Aorta (tissue), 5 donors: ENCODE measurements at regions of chr16 and their contacts with region 1.

Region 1: DNA sequence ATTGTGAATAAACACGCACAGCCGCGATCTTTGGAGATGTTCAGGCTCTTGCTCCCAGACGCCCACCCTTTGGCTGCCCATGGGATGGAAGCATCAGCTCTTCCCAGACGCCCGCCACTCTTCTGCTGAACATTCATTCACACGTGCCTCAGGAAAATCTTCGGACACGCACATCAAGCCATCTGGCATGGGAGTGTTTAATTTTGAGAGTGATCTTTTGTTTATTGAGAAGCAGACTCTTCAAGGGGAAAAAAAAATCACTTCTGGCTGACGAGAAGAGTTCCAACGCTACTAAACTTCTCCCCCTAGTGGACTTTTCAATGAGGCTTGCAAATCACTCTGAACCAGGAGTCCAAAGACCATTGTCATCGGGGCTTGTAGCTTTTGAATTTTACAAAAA is 62.0 kb upstream of the NUDT7 start:
- DNase-seq: no peak
- ATAC-seq: no peak
- H3K4me3 ChIP-seq: no peak overlapping the region
- H3K27ac ChIP-seq: no peak overlapping the region
- H3K4me1 ChIP-seq: no peaks in the 10 kb centered on the region
- H3K27me3 ChIP-seq: no peaks in the 10 kb centered on the region

Region 2: DNA sequence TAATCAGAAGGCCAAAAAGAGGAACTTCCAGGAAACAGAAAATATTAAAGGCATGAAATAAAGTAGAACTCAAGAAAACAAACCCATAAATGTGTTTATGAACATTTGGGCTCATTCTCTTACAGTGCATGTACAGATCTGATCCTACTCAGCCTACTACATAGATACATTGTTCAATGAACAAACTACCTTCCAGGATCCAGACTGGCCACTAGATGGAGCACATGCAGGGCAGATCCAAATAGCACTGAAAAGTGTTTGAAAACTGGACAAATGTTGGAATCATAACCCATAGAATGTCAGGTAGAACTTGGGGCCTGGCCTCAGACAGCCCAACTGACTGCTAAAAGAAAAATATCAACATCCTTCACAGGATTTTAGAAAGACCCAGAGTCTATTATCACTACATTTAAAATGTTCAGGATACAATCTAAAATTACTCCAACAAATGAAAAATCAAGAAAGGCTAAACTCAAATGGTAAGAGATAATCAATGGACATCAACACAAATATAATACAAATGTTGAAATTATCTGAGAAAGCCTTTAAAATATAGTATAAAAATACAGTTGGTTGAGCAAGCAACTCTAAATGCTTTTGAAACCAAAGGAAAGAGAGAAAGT is 60.4 kb before region 1 on chr16:
- intact Hi-C with region 1: loop called (anchors 2 to 5 kb)
- DNase-seq: no peak
- ATAC-seq: no peak
- H3K4me3 ChIP-seq: no peak overlapping the region
- H3K27ac ChIP-seq: no peak overlapping the region
- H3K4me1 ChIP-seq: no peaks in the 10 kb centered on the region
- H3K27me3 ChIP-seq: no peaks in the 10 kb centered on the region